PC-9 (cell line): ENCODE measurements at regions of chr3 and their contacts with region 1.

Region 1: DNA sequence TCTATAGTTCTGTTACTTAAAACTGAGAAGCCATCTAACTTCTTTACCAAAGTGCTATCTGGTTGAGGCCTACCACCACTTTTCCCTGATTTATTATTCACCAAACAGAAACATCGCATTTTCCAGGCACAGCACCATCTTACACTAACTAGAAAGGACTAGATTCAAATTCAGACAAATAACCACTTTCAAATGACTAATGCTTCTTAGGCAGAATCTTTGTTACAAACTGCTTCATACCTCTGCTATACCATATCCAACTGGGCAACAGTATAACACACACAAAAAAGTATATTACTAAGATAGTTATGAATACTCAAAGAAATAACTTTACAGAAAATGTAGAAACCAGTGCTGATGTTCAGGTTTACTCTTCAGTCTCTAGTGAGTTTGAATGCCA is 16.6 kb downstream of the DLG1 start:
- DNase-seq: no peak
- H3K4me3 ChIP-seq: no peak overlapping the region
- H3K27ac ChIP-seq: no peak overlapping the region
- H3K4me1 ChIP-seq: no peaks in the 10 kb centered on the region
- H3K27me3 ChIP-seq: no peaks in the 10 kb centered on the region
- CTCF ChIP-seq: no peak

Region 2: DNA sequence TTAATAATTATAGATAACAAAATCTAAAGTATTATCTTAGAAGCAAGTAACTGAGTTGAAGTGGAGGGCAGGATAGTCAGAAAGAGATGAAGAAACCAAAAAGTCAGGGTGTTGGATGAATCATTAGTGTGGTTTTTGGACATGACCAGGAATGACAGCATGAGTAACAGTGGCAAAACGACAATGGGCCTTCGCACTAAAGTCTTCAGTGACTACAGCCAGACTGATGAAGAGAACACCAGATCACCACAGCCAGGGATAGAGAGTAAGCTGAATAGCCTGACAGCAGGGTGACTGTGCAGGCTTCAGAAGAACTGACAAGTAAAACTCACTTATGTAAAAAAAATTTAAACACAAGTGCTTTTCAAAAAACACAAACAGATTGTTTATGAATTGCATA is 156.2 kb before region 1 on chr3:
- CTCF ChIA-PET with region 1: no interaction called
- POLR2A ChIA-PET with region 1: interaction called, 12 read pairs
- intact Hi-C with region 1: no loop called
- DNase-seq: no peak
- H3K4me3 ChIP-seq: no peak overlapping the region
- H3K27ac ChIP-seq: no peak overlapping the region
- H3K4me1 ChIP-seq: no peaks in the 10 kb centered on the region
- H3K27me3 ChIP-seq: no peaks in the 10 kb centered on the region
- CTCF ChIP-seq: no peak